Activated naive CD4-positive, alpha-beta T cell treated with anti-CD3 and anti-CD28 coated beads for 36 hours (primary cell): ENCODE measurements at regions of chr19 and their contacts with region 1.

Region 1: DNA sequence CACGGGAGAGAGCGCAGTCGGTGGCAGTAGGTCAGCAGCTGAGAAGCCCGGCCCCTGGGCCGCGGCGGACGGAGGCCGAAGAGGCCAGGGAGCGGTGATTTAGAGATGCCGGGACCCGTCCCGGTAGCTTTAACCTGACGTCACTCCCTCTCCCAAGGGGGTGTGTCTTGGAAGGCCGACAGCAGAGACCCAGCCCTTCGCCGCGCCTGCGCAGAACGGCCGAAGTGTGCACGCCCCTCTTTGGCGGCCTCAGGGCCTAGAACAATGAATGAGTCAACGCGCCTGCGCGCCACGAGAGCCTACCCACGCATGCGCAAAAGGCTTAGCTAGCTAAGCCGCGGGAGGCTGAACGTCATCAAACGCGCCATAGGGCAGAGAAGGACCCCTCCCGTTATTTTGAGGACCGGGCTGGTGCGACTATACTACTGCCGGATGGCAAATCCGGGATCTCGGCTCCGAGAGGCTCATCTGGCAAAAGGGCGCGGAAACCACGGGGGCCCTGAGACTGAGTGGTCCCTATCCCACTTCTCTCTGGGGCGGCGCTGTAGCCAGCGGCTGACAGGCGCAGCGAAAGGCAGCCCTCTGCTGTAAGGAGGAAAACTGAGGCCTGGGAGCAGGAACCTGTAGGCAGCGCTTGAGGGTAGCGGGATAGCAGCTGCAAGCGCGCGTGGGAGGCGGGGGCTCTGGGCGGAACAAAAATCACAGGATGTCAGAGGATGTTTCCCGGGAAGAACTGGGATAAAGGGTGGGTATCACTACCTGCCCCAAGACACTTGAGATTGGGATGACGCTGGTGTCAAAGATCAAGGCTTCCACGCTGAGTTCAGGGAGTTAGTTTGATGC is at the starts of genes IRGQ and ZNF576:
- DNase-seq: peak; percentile 100
- H3K4me3 Mint-ChIP-seq: peak within 1 kb of the TSS; percentile 93
- H3K27ac Mint-ChIP-seq: peak within 1 kb of the TSS; percentile 97
- H3K4me1 Mint-ChIP-seq: peaks cover 29% of the 10 kb centered on the region
- H3K27me3 Mint-ChIP-seq: no peaks in the 10 kb centered on the region
- total RNA-seq, gene IRGQ: 17.2 to 18.7 TPM
- total RNA-seq, gene ZNF576: 11.6 to 11.7 TPM

Region 2: DNA sequence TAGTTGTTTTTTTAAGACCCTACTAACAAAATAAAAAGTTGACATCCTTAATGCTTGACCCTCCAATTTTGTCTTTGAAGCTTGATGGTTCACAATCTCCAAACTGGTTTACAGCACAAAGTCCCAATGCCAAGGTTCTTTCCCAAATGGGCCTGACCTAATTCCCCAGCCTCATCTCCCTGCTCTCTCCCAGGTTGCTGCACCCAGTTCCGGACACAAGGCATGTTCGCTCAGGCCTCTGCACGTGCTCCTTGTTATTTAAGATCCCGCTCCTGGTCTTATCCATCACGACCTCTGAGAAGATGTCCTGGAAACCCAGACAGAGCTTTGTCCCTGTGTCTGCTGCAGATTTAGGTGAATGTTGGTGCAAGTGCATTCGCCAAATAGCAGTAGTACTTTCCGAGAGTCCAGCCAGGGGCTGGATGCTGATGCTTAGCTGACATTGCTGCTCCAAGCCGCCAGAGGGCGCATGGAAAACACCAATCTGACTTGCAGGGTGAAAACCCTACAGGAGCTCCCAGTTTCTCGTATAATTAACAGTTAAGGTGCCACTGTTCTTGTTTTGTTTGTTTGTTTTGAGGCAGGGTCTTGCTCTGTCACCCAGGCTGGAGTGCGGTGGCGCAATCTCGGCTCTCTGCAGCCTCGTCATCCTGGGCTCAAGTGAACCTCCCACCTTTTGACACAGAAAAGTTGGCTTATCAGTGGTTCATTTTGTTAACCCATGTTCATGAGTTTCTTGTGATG is 149.3 kb before region 1 on chr19:
- CTCF ChIA-PET with region 1: interaction called, 22 read pairs
- intact Hi-C with region 1: loop called (anchors 1 kb)
- DNase-seq: peak; percentile 89
- H3K4me3 Mint-ChIP-seq: no peak overlapping the region
- H3K27ac Mint-ChIP-seq: no peak overlapping the region
- H3K4me1 Mint-ChIP-seq: peaks cover 21% of the 10 kb centered on the region
- H3K27me3 Mint-ChIP-seq: no peaks in the 10 kb centered on the region

Region 3: DNA sequence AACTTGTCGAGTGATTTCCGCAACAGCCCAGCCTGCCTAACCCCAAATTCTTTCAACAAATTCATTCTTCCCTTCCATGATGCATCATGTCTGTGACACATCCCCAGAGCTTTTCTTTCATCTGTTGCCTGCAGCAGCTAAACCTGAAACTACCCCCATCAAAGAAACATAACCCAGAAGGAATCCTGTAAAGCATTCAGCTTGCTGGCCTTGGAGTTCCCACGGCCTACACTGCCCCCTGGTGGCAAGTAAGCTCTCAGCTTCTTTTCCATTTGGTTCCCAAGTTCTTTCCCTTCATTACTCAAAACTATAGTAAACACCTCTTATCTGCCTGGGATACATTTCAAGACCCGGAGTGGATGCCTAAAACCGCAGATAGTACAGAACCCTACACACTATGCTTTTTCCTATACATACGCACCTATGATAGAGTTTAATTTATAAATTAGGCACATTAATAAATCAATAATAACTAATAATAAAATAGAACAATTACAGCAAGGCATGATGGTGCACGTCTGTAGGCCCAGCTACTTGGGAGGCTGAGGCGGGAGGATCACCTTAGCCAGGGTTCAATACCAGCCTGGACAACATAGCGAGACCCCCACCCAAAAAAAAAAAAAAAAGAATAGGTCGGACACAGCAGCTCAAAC is 76.7 kb before region 1 on chr19:
- CTCF ChIA-PET with region 1: interaction called, 20 read pairs
- intact Hi-C with region 1: no loop called
- DNase-seq: peak; percentile 89
- H3K4me3 Mint-ChIP-seq: no peak overlapping the region
- H3K27ac Mint-ChIP-seq: peak overlapping the region; percentile 48
- H3K4me1 Mint-ChIP-seq: peaks cover 12% of the 10 kb centered on the region
- H3K27me3 Mint-ChIP-seq: no peaks in the 10 kb centered on the region

Region 4: DNA sequence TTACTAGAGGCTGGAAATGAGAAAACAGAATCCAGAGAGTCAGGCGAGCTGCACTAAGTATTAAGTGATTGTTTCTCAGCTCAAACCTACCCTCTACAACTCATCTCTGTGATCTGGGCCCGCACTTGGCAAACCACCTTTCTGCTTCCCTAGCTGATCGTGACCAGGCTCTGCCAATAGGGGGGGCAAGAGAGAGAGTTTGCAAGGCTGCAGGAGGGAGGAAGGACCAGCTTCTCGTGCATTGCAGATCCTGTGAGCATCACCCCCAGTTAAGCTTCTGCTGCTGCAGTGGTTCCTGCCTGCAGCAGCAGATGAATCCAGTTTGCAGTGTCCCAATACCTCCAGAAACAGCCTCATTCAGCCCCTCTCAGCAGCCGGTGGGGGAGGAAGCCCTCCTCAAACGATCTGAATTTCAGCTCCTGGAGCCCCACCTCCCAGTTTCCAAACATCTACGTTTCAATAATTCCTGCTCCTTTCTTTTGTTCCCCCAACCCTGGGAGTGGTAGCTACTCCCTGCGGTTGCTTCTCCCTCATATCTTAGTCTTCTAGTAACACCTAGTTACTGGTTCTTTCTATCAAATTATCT is 40.9 kb before region 1 on chr19:
- CTCF ChIA-PET with region 1: interaction called, 95 read pairs
- intact Hi-C with region 1: loop called (anchors 1 kb)
- DNase-seq: peak; percentile 93
- H3K4me3 Mint-ChIP-seq: no peak overlapping the region
- H3K27ac Mint-ChIP-seq: peak overlapping the region; percentile 44
- H3K4me1 Mint-ChIP-seq: peaks cover 13% of the 10 kb centered on the region
- H3K27me3 Mint-ChIP-seq: no peaks in the 10 kb centered on the region

Region 5: DNA sequence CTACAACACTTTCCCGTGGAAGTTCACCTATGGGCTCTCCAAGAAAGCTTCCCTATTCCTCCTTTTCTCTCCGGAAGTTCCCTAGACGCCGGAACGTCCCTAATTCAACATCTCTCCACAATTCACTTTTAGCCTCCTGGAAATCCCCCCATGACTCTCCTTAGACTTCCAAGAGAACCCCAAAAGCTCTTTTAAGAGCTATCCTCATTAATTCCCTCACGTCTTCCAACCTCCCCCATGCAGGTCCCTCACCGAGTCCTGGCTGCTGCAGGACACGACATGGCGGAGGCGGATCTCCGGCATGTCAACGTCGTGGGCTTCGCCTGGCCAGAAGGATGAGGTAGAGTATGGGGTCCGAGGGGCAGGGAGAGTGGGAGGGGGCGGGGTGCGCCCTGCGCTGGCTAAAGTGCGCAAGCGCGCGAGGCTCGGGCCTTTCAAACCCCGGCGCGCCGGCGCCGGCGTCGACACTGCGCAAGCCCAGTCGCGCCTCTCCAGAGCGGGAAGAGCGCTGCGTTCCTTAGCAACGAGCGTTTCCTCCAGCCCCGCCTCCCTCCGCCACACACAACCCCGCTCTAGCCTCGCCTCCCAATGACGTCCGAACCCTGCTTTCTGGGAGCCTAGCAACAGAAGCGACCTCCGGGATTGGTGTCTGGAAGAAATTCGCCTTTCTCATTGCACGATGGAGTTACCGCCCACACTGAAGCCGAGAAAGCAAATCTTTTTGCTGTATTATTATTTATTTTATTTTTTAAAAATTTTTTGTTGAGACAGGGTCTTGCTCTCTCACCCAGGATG is 20.9 kb before region 1 on chr19 and contains the starts of genes PINLYP and XRCC1:
- CTCF ChIA-PET with region 1: interaction called, 29 read pairs
- intact Hi-C with region 1: loop called (anchors 1 kb)
- DNase-seq: peak; percentile 99
- H3K4me3 Mint-ChIP-seq: peak within 1 kb of the TSS; percentile 95
- H3K27ac Mint-ChIP-seq: peak within 1 kb of the TSS; percentile 94
- H3K4me1 Mint-ChIP-seq: peaks cover 37% of the 10 kb centered on the region
- H3K27me3 Mint-ChIP-seq: no peaks in the 10 kb centered on the region
- total RNA-seq, gene PINLYP: 3.2 to 3.8 TPM
- total RNA-seq, gene XRCC1: 33.7 to 34.5 TPM

Region 6: GRCh38 chr19:43662487-43662886 is 66.3 kb after region 1 on chr19:
- CTCF ChIA-PET with region 1: no interaction called
- intact Hi-C with region 1: no loop called
- DNase-seq: no peak
- H3K4me3 Mint-ChIP-seq: no peak overlapping the region
- H3K27ac Mint-ChIP-seq: no peak overlapping the region
- H3K4me1 Mint-ChIP-seq: peaks cover 26% of the 10 kb centered on the region
- H3K27me3 Mint-ChIP-seq: no peaks in the 10 kb centered on the region

Region 7: DNA sequence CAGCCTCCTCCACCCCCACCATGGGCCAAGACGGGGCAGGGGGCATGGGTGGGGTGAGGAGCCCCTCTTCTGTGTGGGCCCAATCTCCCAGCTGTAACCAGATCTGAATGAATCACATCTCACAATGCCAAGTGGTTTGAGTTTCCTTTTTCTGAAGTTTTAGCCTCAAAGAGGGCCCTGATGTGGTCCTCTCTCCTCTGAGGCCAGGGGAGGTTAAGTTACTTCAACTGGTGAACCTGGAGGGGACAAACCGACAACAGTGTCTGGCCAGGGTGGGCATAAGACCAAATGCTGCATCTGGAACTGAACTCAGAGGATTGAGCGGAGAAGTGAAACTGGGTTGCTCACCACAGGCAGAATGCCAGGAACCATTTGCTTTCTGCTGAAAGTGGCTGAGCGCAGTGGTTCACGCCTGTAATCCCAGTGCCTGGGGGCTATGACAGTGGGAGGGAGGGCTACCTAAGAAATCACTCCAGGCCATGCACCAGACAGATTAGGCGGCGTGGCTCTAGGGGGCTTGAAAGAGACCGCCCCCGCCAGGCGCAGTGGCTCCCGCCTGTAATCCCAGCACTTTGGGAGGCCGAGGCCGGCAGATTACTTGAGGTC is 104.3 kb after region 1 on chr19:
- CTCF ChIA-PET with region 1: no interaction called
- intact Hi-C with region 1: loop called (anchors 1 kb)
- DNase-seq: peak; percentile 42
- H3K4me3 Mint-ChIP-seq: peak overlapping the region; percentile 61
- H3K27ac Mint-ChIP-seq: peak overlapping the region; percentile 91
- H3K4me1 Mint-ChIP-seq: peaks cover 26% of the 10 kb centered on the region
- H3K27me3 Mint-ChIP-seq: peaks cover 10% of the 10 kb centered on the region

Region 8: GRCh38 chr19:44607049-44607448 is 1010.8 kb after region 1 on chr19:
- CTCF ChIA-PET with region 1: no interaction called
- intact Hi-C with region 1: no loop called
- DNase-seq: no peak
- H3K4me3 Mint-ChIP-seq: no peak overlapping the region
- H3K27ac Mint-ChIP-seq: peak overlapping the region; percentile 0
- H3K4me1 Mint-ChIP-seq: peaks cover 16% of the 10 kb centered on the region
- H3K27me3 Mint-ChIP-seq: no peaks in the 10 kb centered on the region